ENCODE measurements at regions of chr5 and their contacts with region 1.

Region 1: GRCh38 chr5:151447174-151448037 is at the start of gene SLC36A1:
- DNase-seq: peak; percentile 33
- H3K4me3 ChIP-seq: peak within 1 kb of the TSS; percentile 85
- H3K27me3 ChIP-seq: no peaks in the 10 kb centered on the region
- CTCF ChIP-seq: peak; percentile 96
- polyA plus RNA-seq, gene SLC36A1: 21.2 and 26.0 TPM in 2 replicates

Region 2: DNA sequence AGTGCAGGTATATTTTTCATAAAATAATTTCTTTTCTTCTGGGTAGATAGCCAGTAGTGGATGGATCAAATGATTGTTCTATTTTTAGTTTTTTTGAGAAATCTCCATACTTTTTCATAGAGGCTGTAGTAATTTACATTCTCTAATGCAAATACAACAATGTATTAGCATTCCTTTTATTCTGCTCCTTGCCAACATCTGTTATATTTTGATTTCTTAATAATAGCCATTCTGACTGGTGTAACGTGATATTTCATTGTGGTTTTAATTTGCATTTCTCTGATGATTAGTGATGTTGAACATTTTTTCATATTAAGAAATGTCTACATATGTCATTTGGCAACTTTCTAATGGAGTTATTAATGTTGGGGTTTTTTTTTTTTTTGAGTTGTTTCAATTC is 72.9 kb before region 1 on chr5:
- CTCF ChIA-PET with region 1: no interaction called
- POLR2A ChIA-PET with region 1: no interaction called
- DNase-seq: no peak
- H3K4me3 ChIP-seq: no peak overlapping the region
- H3K27me3 ChIP-seq: no peaks in the 10 kb centered on the region
- CTCF ChIP-seq: no peak

Region 3: GRCh38 chr5:151432210-151432609 is 15.2 kb before region 1 on chr5:
- CTCF ChIA-PET with region 1: interaction called, 13 read pairs
- POLR2A ChIA-PET with region 1: no interaction called
- DNase-seq: no peak
- H3K4me3 ChIP-seq: no peak overlapping the region
- H3K27me3 ChIP-seq: peaks cover 4% of the 10 kb centered on the region; the same call in 1 of the 2 replicates
- CTCF ChIP-seq: no peak

Region 4: DNA sequence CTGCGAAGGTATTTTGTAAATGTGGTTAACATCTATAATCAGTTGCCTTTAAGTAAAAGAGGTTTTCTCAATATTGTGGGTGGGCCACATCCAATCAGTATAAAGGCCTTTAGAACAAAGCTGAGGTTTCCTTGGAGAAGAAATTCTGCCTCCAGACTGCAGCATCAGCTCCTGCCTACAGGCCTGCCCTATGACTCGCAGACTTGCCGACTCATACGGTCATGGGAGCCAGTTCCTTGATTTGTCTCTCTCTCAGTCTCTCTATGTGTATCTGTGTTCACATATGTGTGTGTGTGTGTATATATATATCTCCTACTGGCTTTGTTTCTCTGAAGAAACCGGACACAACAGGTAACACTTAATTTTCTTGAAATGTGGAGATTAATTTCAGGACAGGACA is 45.3 kb after region 1 on chr5:
- CTCF ChIA-PET with region 1: interaction called, 38 read pairs
- POLR2A ChIA-PET with region 1: interaction called, 4 read pairs
- DNase-seq: no peak
- H3K4me3 ChIP-seq: no peak overlapping the region
- H3K27me3 ChIP-seq: no peaks in the 10 kb centered on the region
- CTCF ChIP-seq: no peak

Region 5: DNA sequence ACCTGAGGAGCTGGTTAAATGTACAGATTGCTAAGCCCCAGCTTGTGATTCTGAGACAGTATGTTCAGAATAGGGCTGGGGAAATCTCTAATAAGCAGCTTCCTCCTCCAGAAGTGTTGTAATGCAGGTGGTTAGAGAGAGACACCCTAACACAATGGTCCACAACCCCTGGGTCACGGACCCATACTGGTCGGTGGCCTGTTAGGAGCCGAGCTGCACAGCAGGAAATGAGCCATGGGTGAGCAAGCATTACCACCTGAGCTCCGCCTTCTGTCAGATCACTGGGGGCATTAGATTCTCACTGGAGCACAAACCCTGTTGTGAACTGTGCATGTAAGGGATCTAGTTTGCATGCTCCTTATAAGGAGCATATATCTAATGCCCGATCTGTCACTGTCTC is 61.8 kb after region 1 on chr5:
- CTCF ChIA-PET with region 1: interaction called, 10 read pairs
- POLR2A ChIA-PET with region 1: no interaction called
- DNase-seq: no peak
- H3K4me3 ChIP-seq: no peak overlapping the region
- H3K27me3 ChIP-seq: no peaks in the 10 kb centered on the region
- CTCF ChIP-seq: no peak

Region 6: DNA sequence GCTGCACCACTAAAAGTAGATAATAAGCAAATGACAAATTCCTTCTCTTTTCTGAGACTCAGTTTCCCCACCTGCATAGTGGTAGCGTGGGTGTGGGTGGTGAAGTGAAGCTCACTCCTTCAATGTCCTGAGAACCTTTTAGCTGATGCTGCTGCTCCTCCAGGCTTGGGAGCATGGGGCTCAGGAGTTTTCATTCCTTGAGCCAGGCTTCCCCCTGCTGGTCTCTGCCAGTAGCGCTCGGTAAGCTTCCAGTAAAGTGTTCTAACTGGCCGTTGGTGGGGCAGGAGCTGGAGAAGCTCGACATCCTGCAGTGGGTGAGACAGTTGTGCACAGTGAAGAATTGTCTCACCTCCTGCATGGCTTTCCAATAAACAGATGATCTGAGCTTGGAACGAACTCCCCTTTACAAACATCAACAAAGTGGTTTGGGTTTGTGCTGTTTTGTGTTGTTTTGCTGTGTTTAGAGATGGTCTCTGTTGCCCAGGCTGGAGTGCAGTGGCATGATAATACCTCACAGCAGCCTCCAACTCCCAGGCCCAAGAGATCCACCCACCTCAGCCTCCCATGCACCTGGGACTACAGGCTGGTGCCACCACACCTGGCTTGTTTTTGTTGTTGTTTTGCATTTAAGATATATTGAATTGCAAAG is 204.7 kb after region 1 on chr5:
- CTCF ChIA-PET with region 1: interaction called, 45 read pairs
- POLR2A ChIA-PET with region 1: interaction called, 4 read pairs
- DNase-seq: no peak
- H3K4me3 ChIP-seq: no peak overlapping the region
- H3K27me3 ChIP-seq: no peaks in the 10 kb centered on the region
- CTCF ChIP-seq: peak; percentile 96

Region 7: DNA sequence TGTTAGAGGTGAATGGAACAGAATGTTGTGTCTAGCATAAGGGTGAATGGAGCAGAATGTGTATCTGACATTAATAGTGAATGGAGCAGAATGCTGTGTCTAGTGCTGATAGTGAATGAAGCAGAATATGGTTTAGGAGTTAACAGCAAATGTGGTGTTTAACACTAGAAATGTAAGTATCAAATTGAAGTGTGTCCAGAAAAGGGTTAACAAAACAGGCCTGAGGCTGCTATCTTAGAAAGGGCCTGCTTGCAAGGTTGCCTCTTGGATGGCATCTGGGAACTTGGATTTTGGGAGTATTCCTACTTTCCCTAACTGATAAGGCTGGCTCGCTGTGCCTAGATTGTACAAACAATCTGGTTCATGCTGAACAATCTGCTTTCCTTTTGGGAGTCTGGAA is 400.5 kb after region 1 on chr5:
- CTCF ChIA-PET with region 1: no interaction called
- POLR2A ChIA-PET with region 1: no interaction called
- DNase-seq: no peak
- H3K4me3 ChIP-seq: no peak overlapping the region
- H3K27me3 ChIP-seq: no peaks in the 10 kb centered on the region
- CTCF ChIP-seq: no peak